Left cardiac atrium (tissue), 4 donors: ENCODE measurements at regions of chr13 and their contacts with region 1.

Region 1: DNA sequence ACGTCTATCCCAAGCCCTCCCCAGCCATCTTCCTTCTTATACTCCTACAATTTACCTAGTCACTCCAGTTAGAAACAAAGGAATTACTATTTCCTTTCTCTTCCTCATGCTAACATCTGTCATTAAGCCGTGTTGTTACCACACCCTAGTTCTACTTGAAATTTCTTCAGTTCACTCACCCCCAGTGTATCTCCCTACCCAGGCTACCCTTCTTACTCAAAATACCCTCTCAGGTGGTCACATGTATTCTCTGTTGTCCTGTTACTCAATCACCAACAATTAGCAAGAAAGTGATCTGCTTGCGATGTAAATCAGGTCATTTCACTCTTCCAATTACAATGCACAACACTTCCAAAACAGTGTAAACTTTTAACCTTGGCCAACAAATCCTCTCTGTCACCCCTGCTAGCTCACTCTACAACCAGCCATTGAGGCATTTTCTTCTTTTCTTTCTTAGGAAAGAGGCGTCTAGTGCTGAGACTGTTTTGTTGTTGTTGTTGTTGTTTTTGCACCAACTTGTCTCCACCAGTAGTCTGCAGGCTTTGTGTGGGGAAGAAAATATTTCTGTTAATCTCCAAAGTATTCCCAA is 50.7 kb downstream of the PCDH17 start:
- DNase-seq: no peak
- ATAC-seq: no peak

Region 2: GRCh38 chr13:57634839-57635165 is 47.4 kb before region 1 on chr13:
- intact Hi-C with region 1: loop called in 1 of 2 experiments (anchors 5 kb)
- DNase-seq: peak; percentile 34
- ATAC-seq: no peak

Region 3: DNA sequence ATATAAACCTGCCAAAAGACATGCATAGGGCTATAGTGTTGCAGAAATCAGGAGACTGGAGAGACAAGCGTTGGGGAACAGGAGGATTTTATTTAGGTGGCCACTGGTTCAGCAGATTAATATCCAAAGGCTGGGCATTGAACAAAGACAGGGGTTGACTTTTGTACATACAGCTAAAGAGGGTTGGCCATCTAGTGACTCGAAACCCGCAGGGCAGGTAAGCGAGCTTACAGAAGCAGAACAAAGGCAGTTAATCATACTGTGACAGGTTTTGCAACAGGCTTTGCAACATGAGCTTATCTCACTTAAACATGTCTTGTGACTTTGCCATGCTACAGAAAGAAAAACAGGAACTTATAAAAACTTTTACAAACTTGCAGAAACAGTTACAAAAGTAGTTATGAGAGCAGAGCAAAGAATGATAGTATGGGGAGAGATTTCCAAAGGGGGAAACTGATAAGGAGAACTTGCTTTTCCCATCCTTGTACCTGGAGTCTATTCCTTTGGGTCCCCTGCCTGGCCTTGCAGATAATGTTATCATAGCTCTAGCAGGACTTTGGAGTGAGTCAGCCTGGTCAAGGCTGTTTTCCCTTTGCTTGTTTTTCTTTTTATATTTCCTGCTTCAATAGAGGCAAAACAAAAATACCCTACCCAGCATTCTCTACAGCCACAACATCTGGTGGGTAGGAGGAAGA is 183.5 kb after region 1 on chr13:
- intact Hi-C with region 1: no loop called
- DNase-seq: no peak
- ATAC-seq: no peak